ENCODE measurements at regions of chr7 and their contacts with region 1.

Region 1: DNA sequence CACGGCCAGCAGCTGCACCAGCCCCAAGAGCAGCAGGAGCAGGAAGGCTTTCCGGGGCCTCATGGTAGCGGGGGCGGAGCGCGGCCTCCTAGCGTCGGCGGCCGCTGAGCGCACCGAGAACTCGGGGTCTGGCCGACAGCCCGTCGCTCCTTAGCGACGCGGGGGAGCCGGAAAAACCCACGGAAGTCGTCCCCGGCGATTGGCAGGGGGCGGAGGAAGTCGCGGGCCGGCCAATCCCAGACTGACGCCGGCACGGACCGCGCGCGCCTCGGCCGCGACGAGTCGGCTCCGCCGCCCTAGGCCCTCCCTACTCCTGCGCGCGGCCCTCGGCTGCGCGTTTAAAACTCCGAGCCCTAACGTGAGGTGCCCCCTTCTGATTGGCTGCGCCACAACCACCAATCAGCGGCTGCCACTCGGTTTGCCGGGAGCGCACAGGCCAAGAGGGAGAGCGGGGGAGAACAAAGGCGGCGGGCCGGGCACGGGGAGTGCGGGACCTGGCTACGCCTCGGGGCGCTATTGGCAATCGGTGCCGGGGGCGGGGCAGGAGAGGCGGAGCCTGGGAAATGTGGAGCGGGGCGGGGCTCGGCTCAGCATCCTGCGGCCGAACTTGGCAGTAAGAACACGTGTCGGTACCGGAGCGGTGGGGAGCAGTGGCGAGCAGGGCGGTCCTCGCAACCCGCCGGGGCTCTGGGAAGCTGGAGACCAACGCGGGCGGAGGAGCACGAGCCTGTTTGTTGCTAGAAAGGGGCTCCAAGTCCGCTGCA is at the start of gene PDIA4:
- DNase-seq: peak; percentile 100
- H3K4me3 Mint-ChIP-seq: peak within 1 kb of the TSS; percentile 95
- H3K27ac Mint-ChIP-seq: peak within 1 kb of the TSS; percentile 89
- H3K4me1 Mint-ChIP-seq: peaks cover 37% of the 10 kb centered on the region
- H3K27me3 Mint-ChIP-seq: no peaks in the 10 kb centered on the region
- total RNA-seq, gene PDIA4: 80.2 to 82.8 TPM

Region 2: DNA sequence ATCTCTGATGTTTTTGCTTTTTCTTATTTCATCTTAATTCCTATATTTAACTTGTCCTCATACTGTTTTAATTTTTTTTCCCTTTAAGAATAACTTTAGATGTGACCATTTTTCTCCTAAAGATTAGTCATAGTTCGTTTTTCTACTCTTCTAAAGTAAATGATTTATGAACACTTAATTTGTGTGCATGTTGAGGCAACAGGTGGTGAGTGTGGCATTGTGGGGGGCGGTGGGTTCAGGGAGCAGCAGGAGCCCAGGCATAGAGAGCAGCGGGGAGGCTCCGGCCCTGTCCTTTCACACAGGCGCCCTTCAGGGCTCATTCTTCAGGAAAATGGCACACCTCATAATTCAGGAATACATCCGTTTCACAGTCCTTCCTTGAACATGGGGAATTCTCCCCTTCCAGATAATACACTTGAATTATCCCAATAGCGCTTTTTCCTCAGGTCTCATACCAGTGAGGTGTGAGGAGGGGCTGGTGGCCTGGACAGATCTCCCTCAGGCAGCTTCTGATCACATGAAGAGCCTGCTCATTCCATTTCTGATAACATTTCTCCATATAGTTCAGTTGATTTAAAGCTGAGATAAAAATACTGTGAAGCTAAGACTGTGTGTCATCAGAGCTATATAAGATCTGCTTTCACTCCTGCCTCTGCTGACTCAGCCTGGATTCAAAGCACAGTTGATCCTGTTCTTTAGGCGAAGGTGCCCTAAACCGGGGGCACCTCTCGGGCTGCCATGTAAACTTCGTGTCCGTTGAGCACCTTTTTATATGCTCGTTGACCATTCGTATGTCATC is 289.6 kb before region 1 on chr7:
- CTCF ChIA-PET with region 1: no interaction called
- intact Hi-C with region 1: no loop called
- DNase-seq: no peak
- H3K4me3 Mint-ChIP-seq: no peak overlapping the region
- H3K27ac Mint-ChIP-seq: no peak overlapping the region
- H3K4me1 Mint-ChIP-seq: peaks cover 30% of the 10 kb centered on the region
- H3K27me3 Mint-ChIP-seq: no peaks in the 10 kb centered on the region

Region 3: GRCh38 chr7:148884299-148885022 is 144.1 kb before region 1 on chr7:
- CTCF ChIA-PET with region 1: no interaction called
- intact Hi-C with region 1: loop called (anchors 1 kb)
- DNase-seq: peak; percentile 93
- H3K4me3 Mint-ChIP-seq: peak overlapping the region; percentile 94
- H3K27ac Mint-ChIP-seq: peak overlapping the region; percentile 99
- H3K4me1 Mint-ChIP-seq: peaks cover 37% of the 10 kb centered on the region
- H3K27me3 Mint-ChIP-seq: no peaks in the 10 kb centered on the region

Region 4: DNA sequence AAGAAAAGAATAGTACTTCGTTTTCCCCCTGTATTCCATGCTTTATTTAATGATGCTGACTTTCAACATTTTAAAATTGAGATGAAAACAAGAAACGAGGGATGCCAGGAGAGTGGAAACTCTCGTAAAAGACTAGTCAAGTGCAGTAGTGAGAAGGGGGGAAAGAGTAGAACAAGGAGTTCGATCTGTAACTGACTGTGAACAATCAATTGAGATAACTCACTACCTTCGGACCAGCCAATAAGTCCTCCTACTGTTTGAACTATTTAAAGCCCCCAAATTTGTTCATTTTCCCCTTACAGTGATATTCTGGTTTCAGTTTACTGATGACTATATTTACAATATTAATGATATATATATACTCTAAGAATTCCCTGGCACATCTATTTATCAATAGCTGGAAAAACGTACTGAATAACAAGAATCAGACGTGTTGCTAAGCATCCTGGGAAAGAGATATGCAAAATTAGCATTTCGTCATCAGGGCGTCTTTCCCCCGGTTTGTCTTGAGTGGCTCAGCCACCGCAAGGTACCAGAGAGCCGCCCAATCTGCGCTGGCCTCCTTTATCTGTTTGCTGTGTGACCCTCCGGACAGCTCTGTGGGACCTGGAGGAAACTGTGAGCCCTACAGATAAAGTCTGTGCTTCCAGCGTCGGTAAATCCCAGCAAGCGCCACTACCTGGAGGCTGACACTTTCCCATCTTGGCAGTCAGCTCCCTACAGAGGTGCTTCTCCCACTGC is 41.3 kb before region 1 on chr7:
- CTCF ChIA-PET with region 1: no interaction called
- intact Hi-C with region 1: loop called (anchors 1 kb)
- DNase-seq: peak; percentile 88
- H3K4me3 Mint-ChIP-seq: peak overlapping the region; percentile 98
- H3K27ac Mint-ChIP-seq: peak overlapping the region; percentile 93
- H3K4me1 Mint-ChIP-seq: peaks cover 40% of the 10 kb centered on the region
- H3K27me3 Mint-ChIP-seq: peaks cover 7% of the 10 kb centered on the region

Region 5: GRCh38 chr7:149090397-149091195 is 62.1 kb after region 1 on chr7 and contains the start of gene ZNF786:
- CTCF ChIA-PET with region 1: interaction called, 4 read pairs
- intact Hi-C with region 1: loop called (anchors 1 kb)
- DNase-seq: peak; percentile 94
- H3K4me3 Mint-ChIP-seq: peak within 1 kb of the TSS; percentile 90
- H3K27ac Mint-ChIP-seq: peak within 1 kb of the TSS; percentile 99
- H3K4me1 Mint-ChIP-seq: peaks cover 20% of the 10 kb centered on the region
- H3K27me3 Mint-ChIP-seq: no peaks in the 10 kb centered on the region
- total RNA-seq, gene ZNF786: 2.1 to 2.2 TPM

Region 6: DNA sequence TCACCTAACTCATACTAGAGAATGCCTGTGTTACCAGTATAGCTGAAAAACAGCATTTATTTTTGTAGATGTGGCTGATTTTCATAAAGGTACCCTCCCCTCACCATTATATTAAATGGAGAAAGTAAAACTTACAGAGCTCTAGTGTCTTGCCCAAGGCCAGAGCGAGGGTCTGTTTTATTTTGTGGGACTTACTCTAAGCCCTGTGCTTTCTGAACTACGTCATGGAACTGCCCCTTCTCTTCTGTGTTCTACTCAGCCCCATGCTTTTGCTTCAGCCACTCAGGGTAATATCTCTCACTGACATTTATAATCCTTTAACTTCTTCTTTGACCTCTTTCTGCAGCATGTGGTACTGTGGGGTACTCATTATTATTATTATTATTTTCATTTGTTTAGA is 72.3 kb after region 1 on chr7:
- CTCF ChIA-PET with region 1: no interaction called
- intact Hi-C with region 1: no loop called
- DNase-seq: no peak
- H3K4me3 Mint-ChIP-seq: no peak overlapping the region
- H3K27ac Mint-ChIP-seq: no peak overlapping the region
- H3K4me1 Mint-ChIP-seq: no peaks in the 10 kb centered on the region
- H3K27me3 Mint-ChIP-seq: no peaks in the 10 kb centered on the region

Region 7: GRCh38 chr7:149195180-149196150 is 166.9 kb after region 1 on chr7 and contains the start of gene ZNF282:
- CTCF ChIA-PET with region 1: interaction called, 3 read pairs
- intact Hi-C with region 1: loop called (anchors 1 kb)
- DNase-seq: peak; percentile 85
- H3K4me3 Mint-ChIP-seq: peak within 1 kb of the TSS; percentile 85
- H3K27ac Mint-ChIP-seq: peak within 1 kb of the TSS; percentile 78
- H3K4me1 Mint-ChIP-seq: peaks cover 30% of the 10 kb centered on the region
- H3K27me3 Mint-ChIP-seq: no peaks in the 10 kb centered on the region
- total RNA-seq, gene ZNF282: 21.6 to 22.0 TPM

Region 8: DNA sequence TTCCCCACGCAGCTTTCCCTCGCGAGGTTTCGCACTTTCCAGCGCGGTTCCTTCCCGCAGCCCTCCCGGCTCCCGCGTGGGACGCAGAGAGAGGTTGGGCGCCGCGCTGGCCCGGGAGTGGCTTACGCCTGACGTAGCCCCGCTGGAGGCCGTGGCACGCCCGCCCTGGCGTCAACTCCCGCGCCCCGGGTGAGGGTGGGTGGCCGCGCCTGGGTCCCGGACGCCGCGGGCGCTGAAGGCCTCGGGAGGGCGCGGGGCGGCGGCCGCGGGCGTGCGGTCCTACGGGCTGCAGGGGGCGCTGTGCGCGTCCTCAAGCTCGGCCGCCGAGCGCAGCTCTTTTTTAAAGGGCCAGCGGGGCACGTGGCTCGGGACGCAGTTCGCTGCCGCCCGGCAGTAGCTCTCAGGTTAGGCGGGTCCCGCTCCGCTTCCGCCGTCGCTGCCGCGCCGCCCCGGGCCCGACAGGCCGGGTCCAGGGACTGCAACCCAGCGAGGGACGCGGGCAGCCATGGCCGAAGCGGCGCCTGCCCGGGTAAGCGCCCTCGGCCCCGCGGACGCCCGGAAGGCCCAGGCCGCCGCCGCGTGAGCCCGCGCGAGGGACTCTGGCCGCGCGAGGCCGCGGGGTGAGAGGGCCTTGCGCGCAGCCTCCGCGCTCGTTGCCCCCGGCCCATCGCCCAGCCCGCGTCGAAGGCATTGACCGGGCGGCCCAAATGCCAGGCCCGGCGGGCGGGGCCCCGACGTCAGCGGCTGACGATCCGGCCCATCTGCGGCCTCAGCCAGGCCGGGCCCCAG is 233.5 kb after region 1 on chr7 and contains the start of gene ZNF783:
- CTCF ChIA-PET with region 1: no interaction called
- intact Hi-C with region 1: loop called (anchors 1 kb)
- DNase-seq: peak; percentile 85
- H3K4me3 Mint-ChIP-seq: peak within 1 kb of the TSS; percentile 75
- H3K27ac Mint-ChIP-seq: peak within 1 kb of the TSS; percentile 74
- H3K4me1 Mint-ChIP-seq: peaks cover 29% of the 10 kb centered on the region
- H3K27me3 Mint-ChIP-seq: no peaks in the 10 kb centered on the region
- total RNA-seq, gene ZNF783: 6.8 to 7.1 TPM

Region 9: GRCh38 chr7:149598721-149599306 is 570.3 kb after region 1 on chr7:
- CTCF ChIA-PET with region 1: no interaction called
- intact Hi-C with region 1: loop called (anchors 1 kb)
- DNase-seq: peak; percentile 69
- H3K4me3 Mint-ChIP-seq: no peak overlapping the region
- H3K27ac Mint-ChIP-seq: peak overlapping the region; percentile 51
- H3K4me1 Mint-ChIP-seq: peaks cover 36% of the 10 kb centered on the region
- H3K27me3 Mint-ChIP-seq: no peaks in the 10 kb centered on the region